Common myeloid progenitor, CD34-positive (primary cell): ENCODE measurements at regions of chr17 and their contacts with region 1.

Region 1: GRCh38 chr17:64420143-64420971 is 28.6 kb upstream of the MILR1 start:
- DNase-seq: peak; percentile 78 to 90 (median 88)
- H3K4me3 ChIP-seq: no peak overlapping the region
- H3K27ac ChIP-seq: no peak overlapping the region
- H3K4me1 ChIP-seq: peaks cover 0 to 3% (median 1%) of the 10 kb centered on the region in 4 experiments
- H3K27me3 ChIP-seq: no peaks in the 10 kb centered on the region

Region 2: GRCh38 chr17:64297467-64298098 is 122.8 kb before region 1 on chr17:
- CTCF ChIA-PET with region 1: interaction called, 148 read pairs
- POLR2A ChIA-PET with region 1: no interaction called
- DNase-seq: no peak
- H3K4me3 ChIP-seq: no peak overlapping the region
- H3K27ac ChIP-seq: no peak overlapping the region
- H3K4me1 ChIP-seq: no peaks in the 10 kb centered on the region
- H3K27me3 ChIP-seq: no peaks in the 10 kb centered on the region

Region 3: DNA sequence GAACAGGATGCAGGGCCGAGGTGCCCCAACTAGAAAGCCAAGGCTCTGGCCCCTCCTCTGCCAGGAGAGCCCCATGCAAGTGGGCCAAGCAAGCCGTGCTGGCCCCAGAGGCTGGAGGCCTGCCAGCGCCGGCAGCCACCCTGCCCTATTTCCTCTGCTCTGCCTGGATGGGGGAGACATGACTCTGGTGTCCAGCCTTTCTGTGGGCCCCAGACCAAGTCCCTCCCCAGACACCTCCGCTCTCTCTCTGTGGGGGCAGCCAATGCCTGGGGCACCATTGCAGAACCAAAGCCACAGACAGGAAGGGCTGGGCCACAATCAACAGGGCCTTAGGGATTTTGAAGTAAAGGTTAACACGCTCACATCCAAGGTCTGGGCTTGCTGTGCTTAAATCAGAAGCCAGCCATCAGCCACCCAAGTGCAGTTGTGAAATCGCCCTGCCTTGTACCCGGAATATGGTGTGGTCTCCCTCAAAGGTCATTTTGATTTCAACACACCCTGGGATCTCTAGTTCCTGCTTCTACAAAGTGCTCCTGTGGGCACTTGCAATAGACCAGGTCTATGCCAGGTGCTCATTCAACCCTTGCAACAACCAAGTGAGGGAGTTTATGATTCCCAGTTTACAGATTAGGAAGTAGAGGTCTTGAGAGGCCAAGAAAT is 93.8 kb before region 1 on chr17:
- CTCF ChIA-PET with region 1: interaction called, 76 read pairs
- POLR2A ChIA-PET with region 1: no interaction called
- DNase-seq: peak in 2 of 3 donors; percentile 62 to 63
- H3K4me3 ChIP-seq: peak overlapping the region in 4 of 7 experiments; percentile 5 to 33 (median 14)
- H3K27ac ChIP-seq: no peak overlapping the region
- H3K4me1 ChIP-seq: peaks cover 3 to 32% (median 25%) of the 10 kb centered on the region in 4 experiments
- H3K27me3 ChIP-seq: no peaks in the 10 kb centered on the region

Region 4: GRCh38 chr17:64431534-64431933 is 11.2 kb after region 1 on chr17:
- CTCF ChIA-PET with region 1: interaction called, 18 read pairs
- POLR2A ChIA-PET with region 1: no interaction called
- DNase-seq: no peak
- H3K4me3 ChIP-seq: no peak overlapping the region
- H3K27ac ChIP-seq: no peak overlapping the region
- H3K4me1 ChIP-seq: no peaks in the 10 kb centered on the region
- H3K27me3 ChIP-seq: no peaks in the 10 kb centered on the region

Region 5: GRCh38 chr17:64470625-64471024 is 50.3 kb after region 1 on chr17:
- CTCF ChIA-PET with region 1: interaction called, 17 read pairs
- POLR2A ChIA-PET with region 1: no interaction called
- DNase-seq: no peak
- H3K4me3 ChIP-seq: no peak overlapping the region
- H3K27ac ChIP-seq: no peak overlapping the region
- H3K4me1 ChIP-seq: no peaks in the 10 kb centered on the region
- H3K27me3 ChIP-seq: no peaks in the 10 kb centered on the region

Region 6: GRCh38 chr17:64506576-64507477 is 86.5 kb after region 1 on chr17 and contains the start of gene CEP95:
- CTCF ChIA-PET with region 1: interaction called, 55 read pairs
- POLR2A ChIA-PET with region 1: interaction called, 3 read pairs
- DNase-seq: peak; percentile 96 to 99 (median 98)
- H3K4me3 ChIP-seq: peak within 1 kb of the TSS; percentile 98 to 100 (median 100)
- H3K27ac ChIP-seq: peak within 1 kb of the TSS; percentile 99
- H3K4me1 ChIP-seq: peaks cover 16 to 29% (median 23%) of the 10 kb centered on the region in 4 experiments
- H3K27me3 ChIP-seq: no peaks in the 10 kb centered on the region